ENCODE measurements at regions of chr16 and their contacts with region 1.

Region 1: DNA sequence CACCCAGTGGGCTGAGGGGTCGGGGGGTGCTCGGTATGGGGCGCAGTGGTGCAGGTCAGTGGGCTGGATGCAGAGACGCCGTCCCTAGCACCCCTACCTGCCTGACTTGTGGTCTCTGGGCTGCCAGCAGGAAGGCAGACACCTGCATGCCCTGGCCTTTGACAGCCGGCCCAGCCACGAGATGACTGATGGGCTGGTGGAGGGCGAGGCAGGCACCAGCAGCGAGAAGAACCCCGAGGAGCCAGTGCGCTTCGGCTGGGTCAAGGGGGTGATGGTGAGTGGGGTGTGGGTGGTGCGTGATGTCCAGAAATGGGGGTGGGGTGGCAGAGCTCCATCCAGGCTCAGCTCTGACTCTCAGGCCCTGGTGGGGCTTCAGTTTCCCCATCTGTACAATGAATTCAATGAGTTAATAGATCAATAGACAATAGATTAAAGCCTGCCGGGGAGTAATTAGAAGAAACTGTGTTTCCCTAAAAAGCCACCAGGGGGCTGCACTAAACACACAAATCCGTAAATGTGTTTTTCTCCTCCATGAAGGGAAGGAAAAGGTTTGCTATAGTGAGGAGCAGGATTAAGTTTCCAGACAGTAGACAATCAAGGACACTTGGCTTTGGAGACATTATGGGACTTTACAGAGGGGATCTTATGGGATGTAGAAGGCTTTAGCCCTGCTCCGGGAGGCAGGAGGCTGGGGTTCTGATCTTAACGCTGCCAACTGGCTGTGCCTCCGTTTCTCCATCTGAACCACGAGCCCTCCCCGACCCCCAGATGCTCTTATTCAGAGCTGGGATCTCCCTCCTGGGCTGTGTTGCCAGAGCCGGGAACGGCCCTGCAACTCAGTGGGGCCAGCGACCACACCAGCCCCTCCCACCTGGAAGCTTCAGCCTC is 2.2 kb downstream of the SLC12A3 start:
- DNase-seq: peak in 1 of 2 donors; percentile 79
- ATAC-seq: peak in 2 of 3 donors; percentile 34 to 63
- H3K4me3 ChIP-seq: no peak overlapping the region
- H3K4me3 Mint-ChIP-seq: no peak overlapping the region
- H3K27ac ChIP-seq: no peak overlapping the region
- H3K27ac Mint-ChIP-seq: peak overlapping the region in 1 of 2 donors; percentile 46
- H3K4me1 ChIP-seq: peaks cover 37% of the 10 kb centered on the region
- H3K4me1 Mint-ChIP-seq: peaks cover 26 to 30% of the 10 kb centered on the region in 2 donors
- H3K27me3 ChIP-seq: no peaks in the 10 kb centered on the region
- H3K27me3 Mint-ChIP-seq: peaks cover 0 to 7% of the 10 kb centered on the region in 2 donors
- CTCF ChIP-seq: peak; percentile 67

Region 2: DNA sequence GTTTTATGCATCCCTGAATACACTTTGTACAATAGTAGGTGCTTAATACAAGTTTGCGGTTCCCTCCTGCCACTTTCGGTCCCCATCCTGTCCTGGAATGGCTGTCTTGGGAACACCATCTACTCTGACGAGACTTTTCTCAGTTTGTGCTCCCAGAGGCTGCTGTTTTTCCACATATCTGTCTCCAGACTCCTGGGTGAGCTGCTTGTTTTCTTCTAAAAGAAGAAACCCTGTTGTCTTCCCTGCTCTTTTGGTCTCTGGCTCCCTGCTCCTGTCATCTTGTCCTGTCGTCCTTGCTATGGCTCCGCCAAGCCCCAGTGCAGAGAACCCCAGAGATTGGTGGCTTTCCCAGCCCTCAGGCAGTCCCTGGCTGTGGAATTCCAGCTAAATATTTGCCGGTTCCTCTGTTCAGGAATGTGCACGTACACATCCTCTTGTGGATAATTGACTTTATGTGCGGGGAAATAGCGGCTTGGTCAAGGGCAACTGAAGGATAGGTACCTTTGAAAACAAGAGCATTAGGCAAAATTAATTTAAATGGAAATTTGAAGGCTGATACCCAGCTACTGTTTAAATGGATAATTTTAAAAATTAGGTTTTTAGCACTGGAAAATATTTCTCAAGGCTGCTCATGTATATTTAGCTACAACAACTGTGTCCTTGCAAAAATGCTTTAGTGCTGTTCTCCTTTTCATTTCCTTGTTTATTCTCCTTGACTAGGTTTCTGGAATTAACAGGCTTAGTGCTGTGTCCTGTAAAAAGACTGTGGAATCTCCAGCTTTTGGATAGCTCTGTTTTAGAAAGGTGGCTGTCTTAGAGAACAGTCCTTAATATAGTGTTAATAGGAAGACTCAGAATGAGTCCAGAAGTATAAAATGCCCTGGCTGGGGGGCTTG is 52.4 kb before region 1 on chr16:
- intact Hi-C with region 1: no loop called
- DNase-seq: no peak
- ATAC-seq: no peak
- H3K4me3 ChIP-seq: no peak overlapping the region
- H3K4me3 Mint-ChIP-seq: no peak overlapping the region
- H3K27ac ChIP-seq: no peak overlapping the region
- H3K27ac Mint-ChIP-seq: peak overlapping the region in 1 of 2 donors; percentile 25
- H3K4me1 ChIP-seq: no peaks in the 10 kb centered on the region
- H3K4me1 Mint-ChIP-seq: peaks cover 0 to 8% of the 10 kb centered on the region in 2 donors
- H3K27me3 ChIP-seq: no peaks in the 10 kb centered on the region
- H3K27me3 Mint-ChIP-seq: no peaks in the 10 kb centered on the region
- CTCF ChIP-seq: no peak

Region 3: DNA sequence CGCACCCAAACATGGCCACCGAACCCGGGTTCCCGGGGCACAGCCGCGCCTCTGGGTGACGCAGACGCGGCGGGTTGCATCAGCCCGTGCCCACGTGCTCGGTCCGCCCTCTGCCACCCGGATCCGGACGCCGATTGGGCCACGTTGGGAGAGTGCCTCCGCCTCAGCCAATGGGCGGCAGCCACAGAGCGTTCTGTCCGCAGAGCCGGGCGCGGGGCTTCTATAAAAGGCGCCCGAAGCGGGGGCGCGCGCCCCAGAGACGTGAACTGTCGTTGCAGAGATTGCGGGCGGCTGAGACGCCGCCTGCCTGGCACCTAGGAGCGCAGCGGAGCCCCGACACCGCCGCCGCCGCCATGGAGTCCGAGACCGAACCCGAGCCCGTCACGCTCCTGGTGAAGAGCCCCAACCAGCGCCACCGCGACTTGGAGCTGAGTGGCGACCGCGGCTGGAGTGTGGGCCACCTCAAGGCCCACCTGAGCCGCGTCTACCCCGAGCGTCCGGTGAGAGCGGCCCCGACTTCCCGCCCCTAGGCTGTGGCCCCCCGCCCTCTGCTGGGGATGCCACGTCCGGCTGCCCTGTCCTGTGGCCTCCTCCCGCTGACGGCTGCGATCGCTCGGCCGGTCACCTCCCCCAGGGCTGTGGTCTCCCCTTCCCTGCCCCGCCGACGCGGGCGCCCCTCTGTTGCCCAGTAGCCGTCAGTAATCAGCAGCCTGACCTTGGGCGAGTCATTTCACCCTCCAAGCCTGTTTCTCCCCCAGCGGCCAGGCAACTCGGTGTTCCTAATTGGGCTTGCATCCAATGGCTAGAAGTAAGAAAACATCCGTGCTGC is 64.9 kb after region 1 on chr16 and contains the start of gene HERPUD1:
- intact Hi-C with region 1: loop called (anchors 1 kb)
- DNase-seq: peak; percentile 99
- ATAC-seq: peak; percentile 89 to 96 (median 92)
- H3K4me3 ChIP-seq: peak within 1 kb of the TSS; percentile 89
- H3K4me3 Mint-ChIP-seq: peak within 1 kb of the TSS; percentile 98
- H3K27ac ChIP-seq: peak within 1 kb of the TSS; percentile 90
- H3K27ac Mint-ChIP-seq: peak within 1 kb of the TSS; percentile 97 to 98
- H3K4me1 ChIP-seq: peaks cover 20% of the 10 kb centered on the region
- H3K4me1 Mint-ChIP-seq: peaks cover 35 to 45% of the 10 kb centered on the region in 2 donors
- H3K27me3 ChIP-seq: no peaks in the 10 kb centered on the region
- H3K27me3 Mint-ChIP-seq: no peaks in the 10 kb centered on the region
- CTCF ChIP-seq: no peak
- total RNA-seq, gene HERPUD1: 181 to 266 (median 243) TPM

Region 4: DNA sequence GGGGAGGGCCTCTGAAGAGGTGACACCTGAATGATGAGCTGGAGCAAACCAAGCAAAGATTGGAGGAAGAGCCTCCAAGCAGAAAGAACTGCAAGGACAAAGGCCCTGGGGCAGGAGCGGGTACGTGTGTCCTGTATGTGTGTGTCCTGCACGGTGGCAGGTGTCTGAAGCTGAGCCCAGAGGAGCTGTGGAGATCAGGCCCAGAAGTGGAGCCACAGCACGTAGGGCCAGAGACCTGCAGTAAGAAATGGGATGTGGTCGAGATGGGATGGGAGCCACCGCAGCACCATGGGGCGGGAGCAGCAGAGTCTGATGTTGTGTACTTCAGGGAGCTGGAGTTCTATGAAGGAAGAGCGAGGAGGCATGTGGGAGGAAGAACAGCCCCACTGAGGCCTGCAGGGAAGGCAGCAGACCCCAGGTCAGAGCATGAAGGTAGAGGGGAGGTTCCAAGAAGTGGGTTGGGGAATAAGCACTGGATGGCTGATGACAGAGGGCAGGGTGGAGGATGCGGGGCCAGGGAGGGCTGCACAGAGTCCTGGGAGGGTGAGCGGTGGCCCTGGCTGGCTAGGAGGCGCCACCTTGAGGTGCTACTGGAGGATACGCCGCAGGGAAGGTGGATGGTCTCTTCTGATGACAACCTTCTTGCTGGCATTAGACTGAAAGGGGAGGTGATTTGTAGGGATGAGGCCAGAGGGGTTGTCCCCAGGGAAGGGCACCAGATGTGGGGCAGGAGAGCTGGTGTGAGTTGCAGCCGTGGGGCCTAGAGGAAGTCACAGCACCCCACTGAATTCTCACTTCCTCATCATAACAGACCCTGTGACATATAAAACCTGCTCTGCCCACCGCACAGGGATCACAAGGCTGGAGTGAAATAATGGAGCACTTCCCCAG is 83.9 kb after region 1 on chr16:
- intact Hi-C with region 1: loop called (anchors 1 kb)
- DNase-seq: peak in 1 of 2 donors; percentile 73
- ATAC-seq: peak; percentile 68 to 78 (median 71)
- H3K4me3 ChIP-seq: no peak overlapping the region
- H3K4me3 Mint-ChIP-seq: no peak overlapping the region
- H3K27ac ChIP-seq: peak overlapping the region; percentile 7
- H3K27ac Mint-ChIP-seq: peak overlapping the region in 1 of 2 donors; percentile 40
- H3K4me1 ChIP-seq: peaks cover 15% of the 10 kb centered on the region
- H3K4me1 Mint-ChIP-seq: peaks cover 10 to 24% of the 10 kb centered on the region in 2 donors
- H3K27me3 ChIP-seq: no peaks in the 10 kb centered on the region
- H3K27me3 Mint-ChIP-seq: no peaks in the 10 kb centered on the region
- CTCF ChIP-seq: peak; percentile 27

Measured in natural killer cell (primary cell).